ENCODE measurements at regions of chr4 and their contacts with region 1.

Region 1: GRCh38 chr4:83075311-83076095 is 39.0 kb downstream of the PLAC8 start:
- DNase-seq: no peak
- H3K4me3 ChIP-seq: no peak overlapping the region
- H3K27ac ChIP-seq: peak overlapping the region; percentile 56 to 69 (median 65)
- H3K4me1 ChIP-seq: peaks cover 0 to 26% (median 24%) of the 10 kb centered on the region in 4 donors
- H3K27me3 ChIP-seq: no peaks in the 10 kb centered on the region
- CTCF ChIP-seq: no peak
- EP300 ChIP-seq: no peak
- POLR2A ChIP-seq: no peak

Region 2: GRCh38 chr4:83110223-83110945 is 34.9 kb after region 1 on chr4:
- intact Hi-C with region 1: loop called (anchors 5 kb)
- DNase-seq: peak; percentile 92
- H3K4me3 ChIP-seq: peak overlapping the region; percentile 51 to 74 (median 60)
- H3K27ac ChIP-seq: peak overlapping the region; percentile 12 to 61 (median 44)
- H3K4me1 ChIP-seq: peaks cover 8 to 16% (median 15%) of the 10 kb centered on the region in 4 donors
- H3K27me3 ChIP-seq: no peaks in the 10 kb centered on the region
- CTCF ChIP-seq: peak; percentile 49 to 58 (median 49)
- EP300 ChIP-seq: no peak
- POLR2A ChIP-seq: no peak

Region 3: GRCh38 chr4:83261307-83261706 is 185.8 kb after region 1 on chr4:
- intact Hi-C with region 1: loop called (anchors 5 kb)
- DNase-seq: no peak
- H3K4me3 ChIP-seq: no peak overlapping the region
- H3K27ac ChIP-seq: no peak overlapping the region
- H3K4me1 ChIP-seq: peaks cover 4 to 17% (median 15%) of the 10 kb centered on the region in 4 donors
- H3K27me3 ChIP-seq: no peaks in the 10 kb centered on the region
- CTCF ChIP-seq: no peak
- EP300 ChIP-seq: no peak
- POLR2A ChIP-seq: no peak

Measured in esophagus muscularis mucosa (tissue), 4 donors.